Ovary (tissue), 10 donors: ENCODE measurements at regions of chr22 and their contacts with region 1.

Region 1: GRCh38 chr22:35864545-35865165 is 147.0 kb downstream of the APOL5 start:
- DNase-seq: no peak
- H3K4me3 ChIP-seq: no peak overlapping the region
- H3K27ac ChIP-seq: no peak overlapping the region
- H3K4me1 ChIP-seq: peaks cover 13% of the 10 kb centered on the region
- H3K27me3 ChIP-seq: no peaks in the 10 kb centered on the region
- CTCF ChIP-seq: no peak
- EP300 ChIP-seq: no peak
- POLR2A ChIP-seq: no peak

Region 2: GRCh38 chr22:34608540-34609115 is 1256.0 kb before region 1 on chr22:
- intact Hi-C with region 1: no loop called
- DNase-seq: no peak
- H3K4me3 ChIP-seq: no peak overlapping the region
- H3K27ac ChIP-seq: no peak overlapping the region
- H3K4me1 ChIP-seq: no peaks in the 10 kb centered on the region
- H3K27me3 ChIP-seq: no peaks in the 10 kb centered on the region
- CTCF ChIP-seq: no peak
- EP300 ChIP-seq: no peak
- POLR2A ChIP-seq: no peak

Region 3: DNA sequence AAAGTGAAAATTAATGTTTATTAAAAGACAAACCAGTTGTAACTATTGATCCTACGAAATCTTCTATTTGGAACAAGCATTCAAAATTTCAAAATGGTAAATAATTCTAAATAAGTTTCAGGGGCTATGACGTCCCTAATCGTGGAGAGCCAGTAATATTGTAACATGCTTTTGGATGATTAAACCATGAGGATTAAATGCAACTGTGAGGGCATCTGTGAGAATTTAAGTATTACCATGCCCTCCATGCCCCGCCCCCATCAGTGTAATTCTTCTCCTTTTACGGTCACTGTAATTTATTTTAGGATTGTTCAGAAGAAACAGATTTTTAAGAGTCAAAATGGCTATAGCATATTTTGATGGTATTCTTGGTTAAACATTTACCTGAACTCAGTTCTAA is 13.8 kb before region 1 on chr22:
- intact Hi-C with region 1: loop called in 1 of 4 experiments (anchors 2 kb)
- DNase-seq: no peak
- H3K4me3 ChIP-seq: no peak overlapping the region
- H3K27ac ChIP-seq: no peak overlapping the region
- H3K4me1 ChIP-seq: peaks cover 2% of the 10 kb centered on the region
- H3K27me3 ChIP-seq: no peaks in the 10 kb centered on the region
- CTCF ChIP-seq: no peak
- EP300 ChIP-seq: no peak
- POLR2A ChIP-seq: no peak

Region 4: DNA sequence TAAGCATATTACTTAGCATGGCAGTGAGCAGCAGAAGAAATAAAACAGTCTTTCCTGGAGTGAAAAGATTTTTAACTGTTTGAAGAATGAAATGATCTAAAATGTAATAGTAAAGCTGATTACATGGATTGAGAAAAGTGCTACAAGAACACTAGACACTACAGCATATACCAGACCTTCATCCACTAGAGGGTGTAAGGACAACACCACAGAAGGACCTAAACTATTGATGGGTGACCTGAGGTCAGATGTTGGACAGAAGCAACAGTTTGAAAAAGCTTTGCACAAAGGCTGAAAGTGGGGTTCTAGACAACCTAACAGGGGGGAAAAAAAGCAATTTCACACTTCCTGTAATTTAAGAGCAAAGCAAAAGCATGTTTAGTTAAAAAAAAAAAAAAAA is 66.3 kb after region 1 on chr22:
- intact Hi-C with region 1: no loop called
- DNase-seq: no peak
- H3K4me3 ChIP-seq: no peak overlapping the region
- H3K27ac ChIP-seq: no peak overlapping the region
- H3K4me1 ChIP-seq: no peaks in the 10 kb centered on the region
- H3K27me3 ChIP-seq: no peaks in the 10 kb centered on the region
- CTCF ChIP-seq: peak; percentile 38 to 69 (median 63)
- EP300 ChIP-seq: no peak
- POLR2A ChIP-seq: no peak